MCF 10A (cell line): ENCODE measurements at regions of chr6 and their contacts with region 1.

Region 1: GRCh38 chr6:2264932-2265331 is 19.5 kb upstream of the GMDS start:
- DNase-seq: peak; percentile 83
- H3K4me3 Mint-ChIP-seq: no peak overlapping the region
- H3K27ac Mint-ChIP-seq: no peak overlapping the region
- H3K4me1 Mint-ChIP-seq: peaks cover 11% of the 10 kb centered on the region
- H3K27me3 Mint-ChIP-seq: no peaks in the 10 kb centered on the region
- CTCF ChIP-seq: peak; percentile 12

Region 2: GRCh38 chr6:2245094-2245876 is 19.6 kb before region 1 on chr6 and contains the start of gene GMDS:
- CTCF ChIA-PET with region 1: no interaction called
- POLR2A ChIA-PET with region 1: interaction called, 14 read pairs
- intact Hi-C with region 1: no loop called
- DNase-seq: peak; percentile 85
- H3K4me3 Mint-ChIP-seq: peak within 1 kb of the TSS; percentile 87
- H3K27ac Mint-ChIP-seq: peak within 1 kb of the TSS; percentile 90
- H3K4me1 Mint-ChIP-seq: peaks cover 16% of the 10 kb centered on the region
- H3K27me3 Mint-ChIP-seq: no peaks in the 10 kb centered on the region
- CTCF ChIP-seq: no peak
- total RNA-seq, gene GMDS: 19.7 and 24.9 TPM in 2 replicates